Sciatic nerve (tissue), 2 donors: ENCODE measurements at regions of chr4 and their contacts with region 1.

Region 1: GRCh38 chr4:16264798-16265197 is 38.5 kb upstream of the TAPT1 start:
- DNase-seq: no peak
- ATAC-seq: peak; percentile 69

Region 2: GRCh38 chr4:15006416-15007024 is 1258.3 kb before region 1 on chr4:
- intact Hi-C with region 1: no loop called
- DNase-seq: no peak
- ATAC-seq: no peak

Region 3: GRCh38 chr4:16026160-16026761 is 238.5 kb before region 1 on chr4:
- intact Hi-C with region 1: loop called (anchors 10 kb)
- DNase-seq: no peak
- ATAC-seq: no peak